ENCODE measurements at regions of chrX and their contacts with region 1.

Region 1: GRCh38 chrX:44871931-44872816 is 814 bp upstream of the KDM6A start:
- DNase-seq: no peak
- H3K4me3 ChIP-seq: peak overlapping the region; percentile 87 to 92
- H3K27ac ChIP-seq: peak overlapping the region; percentile 90 to 94
- H3K4me1 ChIP-seq: peaks cover 0 to 4% of the 10 kb centered on the region in 2 experiments; a peak in 3 of 4 replicates
- H3K27me3 ChIP-seq: no peaks in the 10 kb centered on the region
- CTCF ChIP-seq: no peak
- EP300 ChIP-seq: no peak
- RAD21 ChIP-seq: no peak

Region 2: GRCh38 chrX:45070116-45071007 is 198.2 kb after region 1 on chrX:
- CTCF ChIA-PET with region 1: interaction called, 10 read pairs
- POLR2A ChIA-PET with region 1: no interaction called
- DNase-seq: peak; percentile 36
- H3K4me3 ChIP-seq: no peak overlapping the region
- H3K27ac ChIP-seq: peak overlapping the region in 1 of 2 experiments; percentile 11; a peak in 1 of 4 replicates
- H3K4me1 ChIP-seq: no peaks in the 10 kb centered on the region; a peak in 1 of 4 replicates
- H3K27me3 ChIP-seq: no peaks in the 10 kb centered on the region
- CTCF ChIP-seq: peak; percentile 93
- EP300 ChIP-seq: no peak
- RAD21 ChIP-seq: peak; percentile 84

Measured in SK-N-SH (cell line).